Psoas muscle (tissue), 8 donors: ENCODE measurements at regions of chr5 and their contacts with region 1.

Region 1: DNA sequence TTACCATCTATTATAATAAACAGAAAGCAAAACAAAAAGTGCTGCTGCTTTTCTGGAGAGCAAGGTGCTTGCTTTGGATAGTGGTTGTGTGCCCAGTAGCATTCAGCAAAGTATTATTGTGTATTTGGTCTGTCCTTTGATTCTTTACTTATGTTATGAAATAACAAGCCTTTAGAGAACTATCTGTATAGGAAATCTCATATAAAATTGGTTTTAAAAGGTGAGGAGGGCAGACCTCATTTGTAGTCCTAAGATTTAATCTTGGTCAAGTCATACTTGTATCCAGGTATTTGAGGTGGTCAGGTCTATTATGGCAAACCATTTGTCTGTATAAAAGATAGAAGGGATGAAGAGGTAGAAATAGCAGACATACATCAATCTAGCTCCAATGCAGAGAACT is 53.3 kb downstream of the BDP1 start:
- DNase-seq: no peak
- ATAC-seq: no peak
- H3K4me3 ChIP-seq: no peak overlapping the region
- H3K27ac ChIP-seq: no peak overlapping the region
- H3K4me1 ChIP-seq: no peaks in the 10 kb centered on the region
- H3K27me3 ChIP-seq: no peaks in the 10 kb centered on the region
- CTCF ChIP-seq: no peak

Region 2: GRCh38 chr5:71471193-71471592 is 37.6 kb before region 1 on chr5:
- intact Hi-C with region 1: loop called in 1 of 2 experiments (anchors 5 kb)
- DNase-seq: peak in 1 of 2 donors; percentile 25
- ATAC-seq: peak in 1 of 4 donors; percentile 40
- H3K4me3 ChIP-seq: no peak overlapping the region
- H3K27ac ChIP-seq: no peak overlapping the region
- H3K4me1 ChIP-seq: no peaks in the 10 kb centered on the region
- H3K27me3 ChIP-seq: no peaks in the 10 kb centered on the region
- CTCF ChIP-seq: no peak

Region 3: GRCh38 chr5:71586052-71586940 is 77.5 kb after region 1 on chr5:
- intact Hi-C with region 1: no loop called
- DNase-seq: no peak
- ATAC-seq: peak in 1 of 4 donors; percentile 15
- H3K4me3 ChIP-seq: peak overlapping the region; percentile 87
- H3K27ac ChIP-seq: peak overlapping the region; percentile 85
- H3K4me1 ChIP-seq: peaks cover 14% of the 10 kb centered on the region
- H3K27me3 ChIP-seq: no peaks in the 10 kb centered on the region
- CTCF ChIP-seq: no peak

Region 4: GRCh38 chr5:71697967-71698366 is 189.2 kb after region 1 on chr5:
- intact Hi-C with region 1: no loop called
- DNase-seq: no peak
- ATAC-seq: no peak
- H3K4me3 ChIP-seq: no peak overlapping the region
- H3K27ac ChIP-seq: no peak overlapping the region
- H3K4me1 ChIP-seq: no peaks in the 10 kb centered on the region
- H3K27me3 ChIP-seq: peaks cover 0 to 14% (median 1%) of the 10 kb centered on the region in 3 donors
- CTCF ChIP-seq: peak; percentile 14

Region 5: DNA sequence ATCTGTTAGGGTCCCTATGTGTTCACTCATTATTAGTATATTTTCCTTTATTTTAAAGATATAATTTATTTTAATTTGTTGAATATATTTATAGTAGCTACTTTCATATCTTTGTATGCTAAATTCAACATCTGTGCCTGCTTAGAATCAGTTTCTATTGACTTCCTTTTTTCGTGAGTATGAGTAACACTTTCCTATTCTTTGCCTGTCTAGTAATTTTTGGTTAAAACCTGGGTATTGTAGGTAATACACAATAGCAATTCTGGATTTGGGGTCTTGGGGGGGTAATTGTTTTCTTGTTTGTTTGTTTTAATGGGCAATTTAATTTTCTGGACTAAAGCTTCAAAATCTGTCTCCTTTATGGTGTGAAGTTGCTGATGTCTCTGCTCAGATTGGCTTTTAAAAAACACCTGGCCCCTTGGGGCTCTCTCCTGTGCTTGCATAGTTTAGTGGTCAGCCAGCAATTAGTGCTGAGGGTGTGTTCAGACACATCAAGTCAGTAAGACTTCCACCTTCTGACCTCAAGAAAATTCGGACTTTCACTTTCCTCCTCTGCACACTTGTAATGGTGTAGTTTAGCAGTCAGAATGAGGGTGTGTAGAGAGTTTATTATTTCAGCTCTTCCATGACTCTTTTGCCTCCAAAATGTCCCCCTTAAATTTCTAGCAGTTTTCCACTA is 474.1 kb after region 1 on chr5:
- intact Hi-C with region 1: no loop called
- DNase-seq: no peak
- ATAC-seq: no peak
- H3K4me3 ChIP-seq: no peak overlapping the region
- H3K27ac ChIP-seq: no peak overlapping the region
- H3K4me1 ChIP-seq: no peaks in the 10 kb centered on the region
- H3K27me3 ChIP-seq: no peaks in the 10 kb centered on the region
- CTCF ChIP-seq: no peak